ENCODE measurements at regions of chrX and their contacts with region 1.

Region 1: DNA sequence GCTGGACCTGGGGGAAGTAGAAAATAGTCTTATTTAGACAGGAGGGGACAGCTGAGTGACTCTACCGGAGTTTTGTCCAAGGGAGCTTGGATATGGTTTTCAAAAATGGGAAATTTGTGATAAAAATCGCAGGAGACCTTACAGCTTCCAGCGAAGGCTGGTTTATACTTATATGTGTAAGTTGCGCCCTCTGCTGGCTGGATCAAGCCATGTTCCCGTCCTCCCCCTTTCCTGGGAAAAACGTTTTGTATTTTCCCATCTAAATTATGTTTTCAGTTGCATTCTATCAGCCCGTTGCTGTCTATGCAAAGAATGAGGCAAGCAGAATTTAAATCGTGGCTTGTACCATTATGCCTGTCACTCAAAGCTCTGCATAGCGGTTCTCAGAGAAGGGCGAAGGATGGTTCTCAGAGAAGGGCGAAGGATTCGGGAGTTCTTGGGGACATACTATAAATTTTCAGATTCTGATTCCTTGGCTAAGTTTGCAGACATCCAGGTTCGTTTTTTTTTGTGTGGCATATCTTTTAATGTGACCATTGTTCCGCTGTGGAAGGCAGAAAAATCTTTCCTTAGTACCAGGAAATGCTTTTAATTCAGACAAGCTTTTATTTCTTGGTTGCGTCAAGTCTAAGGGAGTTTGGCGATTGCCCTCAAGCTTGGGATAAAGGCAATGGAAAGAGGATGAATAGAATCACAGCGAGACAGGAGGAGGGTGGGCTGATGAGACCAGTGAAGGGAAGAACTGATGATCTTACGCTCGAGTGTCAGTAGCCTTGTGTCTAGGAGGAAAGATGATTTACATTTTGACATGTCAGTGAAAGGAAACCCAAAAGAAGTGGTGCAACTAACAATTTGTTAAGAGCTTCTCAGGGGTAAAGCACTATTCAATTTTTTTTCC is 128.5 kb upstream of the ARX start:
- DNase-seq: peak; percentile 34
- ATAC-seq: no peak
- H3K4me3 Mint-ChIP-seq: no peak overlapping the region
- H3K27ac Mint-ChIP-seq: no peak overlapping the region
- H3K4me1 Mint-ChIP-seq: no peaks in the 10 kb centered on the region
- H3K27me3 Mint-ChIP-seq: peaks cover 15% of the 10 kb centered on the region

Region 2: DNA sequence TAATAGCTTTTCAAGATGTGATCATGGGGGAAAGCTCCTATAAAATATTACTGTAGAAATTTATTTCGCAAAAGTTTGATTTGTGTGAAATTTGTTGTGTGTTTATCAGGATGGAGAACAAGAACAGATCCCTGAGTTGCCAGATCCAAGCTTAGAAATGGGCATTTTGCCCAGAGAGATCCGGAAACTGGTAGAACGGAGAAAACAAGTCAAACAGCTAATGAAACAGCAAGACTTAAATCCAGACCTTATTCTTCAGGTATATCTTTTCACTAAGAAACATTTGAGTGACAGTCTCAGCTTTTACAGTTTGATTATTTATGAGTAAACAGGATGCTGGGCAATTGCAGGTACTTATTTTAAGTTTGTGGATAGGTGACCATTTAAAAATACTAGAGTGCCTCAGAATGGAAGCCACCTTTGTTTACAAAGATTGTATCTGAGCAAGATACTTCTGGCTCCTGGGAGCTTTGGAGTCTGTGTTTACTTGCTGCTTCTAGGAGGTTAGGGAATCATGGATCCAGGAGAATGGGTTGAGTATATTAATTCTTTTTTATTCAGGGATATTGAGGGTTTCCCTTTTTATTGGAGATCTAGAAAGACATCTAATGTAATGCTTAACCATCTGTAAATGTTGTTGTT is 396.0 kb before region 1 on chrX:
- CTCF ChIA-PET with region 1: interaction called, 13 read pairs
- POLR2A ChIA-PET with region 1: no interaction called
- DNase-seq: no peak
- ATAC-seq: no peak
- H3K4me3 Mint-ChIP-seq: no peak overlapping the region
- H3K27ac Mint-ChIP-seq: no peak overlapping the region
- H3K4me1 Mint-ChIP-seq: no peaks in the 10 kb centered on the region
- H3K27me3 Mint-ChIP-seq: no peaks in the 10 kb centered on the region

Region 3: GRCh38 chrX:25020905-25021449 is 123.3 kb before region 1 on chrX:
- CTCF ChIA-PET with region 1: interaction called, 15 read pairs
- POLR2A ChIA-PET with region 1: no interaction called
- DNase-seq: peak; percentile 30
- ATAC-seq: peak; percentile 73
- H3K4me3 Mint-ChIP-seq: no peak overlapping the region
- H3K27ac Mint-ChIP-seq: no peak overlapping the region
- H3K4me1 Mint-ChIP-seq: peaks cover 19% of the 10 kb centered on the region
- H3K27me3 Mint-ChIP-seq: peaks cover 66% of the 10 kb centered on the region